CD4-positive, alpha-beta memory T cell (primary cell): ENCODE measurements at regions of chr6 and their contacts with region 1.

Region 1: GRCh38 chr6:34610819-34611477 is 54.8 kb upstream of the SPDEF start:
- DNase-seq: no peak
- H3K4me3 ChIP-seq: no peak overlapping the region
- H3K4me3 Mint-ChIP-seq: no peak overlapping the region
- H3K27ac ChIP-seq: no peak overlapping the region
- H3K27ac Mint-ChIP-seq: peak overlapping the region in 5 of 7 donors; percentile 48 to 74 (median 63)
- H3K4me1 ChIP-seq: peaks cover 8% of the 10 kb centered on the region
- H3K4me1 Mint-ChIP-seq: peaks cover 10 to 23% (median 15%) of the 10 kb centered on the region in 4 donors
- H3K27me3 ChIP-seq: no peaks in the 10 kb centered on the region
- H3K27me3 Mint-ChIP-seq: no peaks in the 10 kb centered on the region

Region 2: GRCh38 chr6:34350137-34350933 is 260.6 kb before region 1 on chr6:
- CTCF ChIA-PET with region 1: no interaction called
- POLR2A ChIA-PET with region 1: no interaction called
- intact Hi-C with region 1: no loop called
- DNase-seq: no peak
- H3K4me3 ChIP-seq: no peak overlapping the region
- H3K4me3 Mint-ChIP-seq: no peak overlapping the region
- H3K27ac ChIP-seq: no peak overlapping the region
- H3K27ac Mint-ChIP-seq: no peak overlapping the region
- H3K4me1 ChIP-seq: peaks cover 5% of the 10 kb centered on the region
- H3K4me1 Mint-ChIP-seq: peaks cover 12 to 22% (median 15%) of the 10 kb centered on the region in 4 donors
- H3K27me3 ChIP-seq: no peaks in the 10 kb centered on the region
- H3K27me3 Mint-ChIP-seq: no peaks in the 10 kb centered on the region

Region 3: GRCh38 chr6:34374069-34374468 is 236.9 kb before region 1 on chr6:
- CTCF ChIA-PET with region 1: no interaction called
- POLR2A ChIA-PET with region 1: no interaction called
- intact Hi-C with region 1: no loop called
- DNase-seq: no peak
- H3K4me3 ChIP-seq: no peak overlapping the region
- H3K4me3 Mint-ChIP-seq: no peak overlapping the region
- H3K27ac ChIP-seq: no peak overlapping the region
- H3K27ac Mint-ChIP-seq: no peak overlapping the region
- H3K4me1 ChIP-seq: peaks cover 8% of the 10 kb centered on the region
- H3K4me1 Mint-ChIP-seq: peaks cover 9 to 38% (median 16%) of the 10 kb centered on the region in 4 donors
- H3K27me3 ChIP-seq: no peaks in the 10 kb centered on the region
- H3K27me3 Mint-ChIP-seq: no peaks in the 10 kb centered on the region

Region 4: DNA sequence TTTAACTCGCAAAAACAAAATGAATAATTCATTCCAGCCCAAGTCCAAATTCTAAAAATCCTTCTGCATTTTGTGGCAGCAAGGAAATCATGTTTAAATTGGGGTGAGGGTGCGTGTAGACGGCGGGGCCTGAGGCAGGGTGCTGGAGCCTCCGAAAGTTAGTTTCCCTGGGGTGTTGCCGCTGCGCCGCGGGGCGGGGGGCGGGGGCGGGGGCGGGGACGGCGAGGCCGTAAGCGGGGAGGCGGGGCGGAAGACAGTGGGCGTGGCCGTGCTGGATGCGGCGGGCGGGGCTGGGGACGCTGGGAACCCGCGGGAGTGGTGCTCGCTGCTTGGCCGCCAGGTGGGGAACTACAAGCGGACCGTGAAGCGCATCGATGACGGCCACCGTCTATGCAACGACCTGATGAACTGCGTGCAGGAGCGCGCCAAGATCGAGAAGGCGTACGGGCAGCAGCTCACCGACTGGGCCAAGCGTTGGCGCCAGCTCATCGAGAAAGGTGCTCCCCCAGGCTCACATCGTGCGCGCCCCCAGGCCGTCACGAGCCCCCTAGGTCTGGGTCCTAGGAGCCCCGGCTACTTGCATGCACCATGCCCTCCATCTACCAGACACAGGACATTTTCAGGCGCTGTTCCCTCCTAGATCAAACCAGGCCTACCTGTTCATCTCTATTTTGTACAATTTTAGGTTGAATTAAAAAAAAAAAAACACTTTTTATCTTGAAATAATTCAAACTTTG is 83.8 kb before region 1 on chr6:
- CTCF ChIA-PET with region 1: interaction called, 21 read pairs
- POLR2A ChIA-PET with region 1: no interaction called
- intact Hi-C with region 1: loop called (anchors 1 kb)
- DNase-seq: peak; percentile 93 to 94 (median 93)
- H3K4me3 ChIP-seq: peak overlapping the region in 1 of 2 donors; percentile 20
- H3K4me3 Mint-ChIP-seq: peak overlapping the region in 6 of 8 donors; percentile 57 to 70 (median 64)
- H3K27ac ChIP-seq: no peak overlapping the region
- H3K27ac Mint-ChIP-seq: peak overlapping the region; percentile 27 to 78 (median 68)
- H3K4me1 ChIP-seq: peaks cover 15% of the 10 kb centered on the region
- H3K4me1 Mint-ChIP-seq: peaks cover 5 to 17% (median 7%) of the 10 kb centered on the region in 4 donors
- H3K27me3 ChIP-seq: no peaks in the 10 kb centered on the region
- H3K27me3 Mint-ChIP-seq: no peaks in the 10 kb centered on the region

Region 5: GRCh38 chr6:34595332-34596184 is 15.4 kb before region 1 on chr6:
- CTCF ChIA-PET with region 1: interaction called, 15 read pairs
- POLR2A ChIA-PET with region 1: interaction called, 3 read pairs
- intact Hi-C with region 1: no loop called
- DNase-seq: no peak
- H3K4me3 ChIP-seq: no peak overlapping the region
- H3K4me3 Mint-ChIP-seq: no peak overlapping the region
- H3K27ac ChIP-seq: no peak overlapping the region
- H3K27ac Mint-ChIP-seq: peak overlapping the region in 2 of 7 donors; percentile 25 to 80
- H3K4me1 ChIP-seq: peaks cover 23% of the 10 kb centered on the region
- H3K4me1 Mint-ChIP-seq: peaks cover 40 to 66% (median 54%) of the 10 kb centered on the region in 4 donors
- H3K27me3 ChIP-seq: no peaks in the 10 kb centered on the region
- H3K27me3 Mint-ChIP-seq: no peaks in the 10 kb centered on the region

Region 6: GRCh38 chr6:34630040-34630439 is 19.1 kb after region 1 on chr6:
- CTCF ChIA-PET with region 1: interaction called, 11 read pairs
- POLR2A ChIA-PET with region 1: no interaction called
- intact Hi-C with region 1: no loop called
- DNase-seq: no peak
- H3K4me3 ChIP-seq: no peak overlapping the region
- H3K4me3 Mint-ChIP-seq: no peak overlapping the region
- H3K27ac ChIP-seq: no peak overlapping the region
- H3K27ac Mint-ChIP-seq: no peak overlapping the region
- H3K4me1 ChIP-seq: no peaks in the 10 kb centered on the region
- H3K4me1 Mint-ChIP-seq: peaks cover 9 to 16% (median 11%) of the 10 kb centered on the region in 4 donors
- H3K27me3 ChIP-seq: no peaks in the 10 kb centered on the region
- H3K27me3 Mint-ChIP-seq: no peaks in the 10 kb centered on the region